Colonic mucosa (tissue), 4 donors: ENCODE measurements at regions of chr2 and their contacts with region 1.

Region 1: GRCh38 chr2:25362049-25362433 is 20.3 kb upstream of the DNMT3A start:
- DNase-seq: peak; percentile 97
- H3K4me3 ChIP-seq: peak overlapping the region; percentile 29
- H3K27ac ChIP-seq: peak overlapping the region; percentile 68
- H3K4me1 ChIP-seq: no peaks in the 10 kb centered on the region
- H3K27me3 ChIP-seq: no peaks in the 10 kb centered on the region
- CTCF ChIP-seq: peak; percentile 97

Region 2: DNA sequence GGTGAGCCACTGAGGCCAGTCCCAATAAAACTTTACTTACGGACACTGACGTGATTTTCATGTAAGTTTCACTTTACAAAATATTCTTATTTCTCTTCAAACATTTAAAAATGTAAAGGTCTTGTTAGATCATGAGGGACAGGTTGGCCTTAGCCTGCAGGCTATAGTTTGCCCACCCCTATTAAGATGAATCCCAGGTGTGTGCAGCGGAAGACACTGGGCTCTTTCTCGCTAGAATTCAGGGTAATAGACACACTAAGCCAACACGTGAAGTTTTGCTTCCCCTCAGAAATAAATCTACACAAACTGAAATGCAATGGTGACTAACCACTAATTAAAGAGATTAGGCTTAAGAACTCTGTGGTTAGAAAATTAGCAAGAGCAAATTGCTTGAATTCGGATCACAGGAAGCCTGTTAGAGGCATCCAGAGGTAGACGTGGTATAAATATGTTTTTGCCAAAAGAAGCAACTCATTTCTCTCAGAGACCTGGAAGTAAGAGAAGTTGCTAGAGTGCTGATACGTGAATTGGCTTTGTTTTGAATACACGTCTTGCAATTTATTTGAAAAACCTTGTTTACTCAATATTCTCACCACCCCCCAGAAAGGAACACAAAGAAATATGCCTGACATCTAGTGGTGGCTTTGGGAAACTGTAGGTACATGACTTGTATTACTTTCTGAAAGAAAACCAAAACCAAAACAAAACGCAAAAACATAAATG is 159.8 kb after region 1 on chr2:
- intact Hi-C with region 1: loop called (anchors 5 kb)
- DNase-seq: peak; percentile 59
- H3K4me3 ChIP-seq: peak overlapping the region; percentile 14
- H3K27ac ChIP-seq: no peak overlapping the region
- H3K4me1 ChIP-seq: no peaks in the 10 kb centered on the region
- H3K27me3 ChIP-seq: no peaks in the 10 kb centered on the region
- CTCF ChIP-seq: peak; percentile 67

Region 3: DNA sequence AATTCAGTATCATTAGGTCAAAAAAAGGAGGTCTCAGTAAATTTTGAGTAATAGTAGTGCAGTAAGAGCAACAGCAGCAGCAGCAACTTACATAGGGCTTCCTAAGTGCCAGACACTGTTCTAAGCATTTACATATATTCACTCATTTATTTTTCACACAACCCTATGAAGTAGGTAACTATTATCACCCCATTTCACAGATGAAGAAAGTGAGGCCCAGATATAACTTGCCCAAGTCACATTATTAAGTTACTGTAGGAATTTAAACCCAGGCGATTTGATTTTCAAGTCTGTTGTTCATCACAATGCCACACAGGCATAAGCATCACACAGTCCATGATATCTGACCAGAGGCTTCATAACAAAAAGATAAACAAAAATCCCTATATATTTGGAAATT is 401.5 kb after region 1 on chr2:
- intact Hi-C with region 1: no loop called
- DNase-seq: no peak
- H3K4me3 ChIP-seq: no peak overlapping the region
- H3K27ac ChIP-seq: no peak overlapping the region
- H3K4me1 ChIP-seq: no peaks in the 10 kb centered on the region
- H3K27me3 ChIP-seq: no peaks in the 10 kb centered on the region
- CTCF ChIP-seq: no peak